ENCODE measurements at regions of chr11 and their contacts with region 1.

Region 1: GRCh38 chr11:1572197-1573076 is at the start of gene DUSP8:
- DNase-seq: peak; percentile 97
- ATAC-seq: peak; percentile 48
- H3K4me3 ChIP-seq: peak within 1 kb of the TSS in 4 of 5 experiments; percentile 40 to 75 (median 64)
- H3K4me3 Mint-ChIP-seq: peak within 1 kb of the TSS; percentile 84
- H3K27ac ChIP-seq: peak within 1 kb of the TSS; percentile 85
- H3K27ac Mint-ChIP-seq: peak within 1 kb of the TSS; percentile 70
- H3K4me1 ChIP-seq: peaks cover 31 to 33% of the 10 kb centered on the region in 2 donors
- H3K4me1 Mint-ChIP-seq: peaks cover 20% of the 10 kb centered on the region
- H3K27me3 ChIP-seq: peaks cover 0 to 32% (median 9%) of the 10 kb centered on the region in 4 experiments
- H3K27me3 Mint-ChIP-seq: peaks cover 10% of the 10 kb centered on the region
- CTCF ChIP-seq: no peak
- total RNA-seq, gene DUSP8: 4.3 and 5.2 TPM in 2 replicates

Region 2: GRCh38 chr11:1262172-1263006 is 310.0 kb before region 1 on chr11:
- CTCF ChIA-PET with region 1: interaction called, 7 read pairs
- POLR2A ChIA-PET with region 1: no interaction called
- intact Hi-C with region 1: loop called (anchors 5 kb)
- DNase-seq: peak; percentile 83
- ATAC-seq: peak; percentile 94
- H3K4me3 ChIP-seq: peak overlapping the region in 4 of 5 experiments; percentile 54 to 67 (median 62)
- H3K4me3 Mint-ChIP-seq: peak overlapping the region; percentile 87
- H3K27ac ChIP-seq: peak overlapping the region; percentile 25 to 79
- H3K27ac Mint-ChIP-seq: peak overlapping the region; percentile 86
- H3K4me1 ChIP-seq: peaks cover 12 to 20% of the 10 kb centered on the region in 2 donors
- H3K4me1 Mint-ChIP-seq: peaks cover 19% of the 10 kb centered on the region
- H3K27me3 ChIP-seq: no peaks in the 10 kb centered on the region
- H3K27me3 Mint-ChIP-seq: no peaks in the 10 kb centered on the region
- CTCF ChIP-seq: no peak

Region 3: DNA sequence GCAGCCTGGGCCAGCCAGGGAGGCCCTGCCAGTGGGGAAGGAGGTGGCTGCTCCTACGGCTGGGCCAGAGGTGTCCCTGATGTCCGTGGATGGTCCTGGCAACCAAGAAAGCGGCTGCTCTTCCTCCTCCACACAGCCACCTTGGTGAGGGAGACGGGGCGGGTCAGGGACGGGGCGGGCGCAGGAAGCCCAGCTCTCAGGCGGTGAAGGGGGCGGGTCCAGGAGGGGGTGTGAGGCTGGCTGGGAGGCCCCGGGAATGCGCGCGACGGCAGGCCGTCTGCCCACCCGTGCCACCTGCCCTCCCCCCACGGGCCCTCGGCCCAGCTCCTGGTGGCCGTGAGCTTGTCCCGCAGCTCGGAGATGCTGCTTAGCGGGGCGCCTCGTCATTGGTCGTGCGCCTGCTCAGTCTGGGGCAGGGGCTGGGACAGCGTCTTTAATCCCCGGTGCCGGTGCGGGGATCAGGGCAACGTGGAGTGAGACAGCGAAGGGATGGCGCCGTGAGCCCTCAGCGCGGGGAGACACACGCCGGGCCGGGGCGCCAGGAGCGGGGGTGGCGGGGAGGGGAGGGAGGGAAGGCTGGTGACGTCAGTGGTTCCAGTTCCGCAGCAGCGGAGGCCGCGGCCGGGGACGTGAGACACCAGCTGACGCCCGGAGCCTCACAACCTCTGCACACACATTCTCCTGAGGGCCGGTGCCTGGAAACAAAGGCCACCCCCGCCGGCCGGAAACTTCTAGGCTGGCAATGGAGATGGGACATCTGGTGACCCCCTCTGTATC is 189.4 kb before region 1 on chr11:
- CTCF ChIA-PET with region 1: interaction called, 3 read pairs
- POLR2A ChIA-PET with region 1: no interaction called
- intact Hi-C with region 1: loop called (anchors 1 kb)
- DNase-seq: peak; percentile 92
- ATAC-seq: peak; percentile 76
- H3K4me3 ChIP-seq: peak overlapping the region in 4 of 5 experiments; percentile 64 to 81 (median 70)
- H3K4me3 Mint-ChIP-seq: peak overlapping the region; percentile 87
- H3K27ac ChIP-seq: peak overlapping the region; percentile 96
- H3K27ac Mint-ChIP-seq: peak overlapping the region; percentile 96
- H3K4me1 ChIP-seq: peaks cover 3 to 30% of the 10 kb centered on the region in 2 donors
- H3K4me1 Mint-ChIP-seq: peaks cover 35% of the 10 kb centered on the region
- H3K27me3 ChIP-seq: peaks cover 0 to 2% (median 0%) of the 10 kb centered on the region in 4 experiments
- H3K27me3 Mint-ChIP-seq: no peaks in the 10 kb centered on the region
- CTCF ChIP-seq: no peak

Region 4: DNA sequence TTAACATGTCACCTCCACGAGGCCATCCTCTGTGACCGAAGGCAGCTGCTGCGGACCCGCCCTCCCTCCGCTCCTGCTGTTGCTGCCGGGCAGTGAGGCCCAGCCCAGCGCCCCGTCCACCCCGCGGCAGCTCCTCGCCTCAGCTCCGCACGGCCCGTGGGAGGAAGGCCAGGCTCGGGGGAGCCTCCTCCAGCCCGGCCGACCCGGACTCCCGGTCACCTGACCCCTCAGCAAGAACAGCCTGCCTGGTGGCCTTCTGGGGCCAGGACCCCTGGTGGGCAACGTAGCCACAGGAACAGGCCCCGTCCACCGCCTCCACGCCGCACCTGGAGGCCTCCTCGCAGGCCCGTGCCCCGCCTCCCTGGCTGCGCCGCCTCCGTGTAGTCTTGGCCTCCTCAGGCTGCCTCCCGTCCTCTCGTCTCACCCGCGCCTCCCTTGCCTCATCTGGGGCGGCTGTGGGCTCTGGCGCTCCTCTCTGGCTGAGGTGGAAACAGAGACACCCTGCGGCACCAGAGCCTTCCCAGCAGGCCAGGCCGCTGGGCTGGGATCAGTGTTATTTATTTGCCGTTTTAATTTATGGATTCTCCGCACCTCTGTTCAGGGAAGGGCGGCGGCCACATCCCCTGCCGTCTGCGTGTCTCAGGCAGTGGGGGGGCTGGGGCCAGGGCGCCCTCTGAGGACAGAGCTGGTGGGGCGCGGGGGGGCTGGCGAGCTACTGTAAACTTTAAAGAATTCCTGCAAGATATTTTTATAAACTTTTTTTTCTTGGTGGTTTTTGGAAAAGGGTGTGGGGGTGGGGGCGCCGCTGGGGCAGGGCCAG is 111.2 kb before region 1 on chr11:
- CTCF ChIA-PET with region 1: no interaction called
- POLR2A ChIA-PET with region 1: no interaction called
- intact Hi-C with region 1: no loop called
- DNase-seq: no peak
- ATAC-seq: no peak
- H3K4me3 ChIP-seq: no peak overlapping the region
- H3K4me3 Mint-ChIP-seq: no peak overlapping the region
- H3K27ac ChIP-seq: no peak overlapping the region
- H3K27ac Mint-ChIP-seq: no peak overlapping the region
- H3K4me1 ChIP-seq: no peaks in the 10 kb centered on the region
- H3K4me1 Mint-ChIP-seq: no peaks in the 10 kb centered on the region
- H3K27me3 ChIP-seq: no peaks in the 10 kb centered on the region
- H3K27me3 Mint-ChIP-seq: no peaks in the 10 kb centered on the region
- CTCF ChIP-seq: no peak

Region 5: GRCh38 chr11:1515082-1516060 is 57.1 kb before region 1 on chr11:
- CTCF ChIA-PET with region 1: interaction called, 14 read pairs
- POLR2A ChIA-PET with region 1: interaction called, 3 read pairs
- intact Hi-C with region 1: no loop called
- DNase-seq: peak; percentile 75
- ATAC-seq: peak; percentile 84
- H3K4me3 ChIP-seq: no peak overlapping the region
- H3K4me3 Mint-ChIP-seq: peak overlapping the region; percentile 23
- H3K27ac ChIP-seq: no peak overlapping the region
- H3K27ac Mint-ChIP-seq: no peak overlapping the region
- H3K4me1 ChIP-seq: peaks cover 9 to 17% of the 10 kb centered on the region in 2 donors
- H3K4me1 Mint-ChIP-seq: peaks cover 53% of the 10 kb centered on the region
- H3K27me3 ChIP-seq: no peaks in the 10 kb centered on the region
- H3K27me3 Mint-ChIP-seq: no peaks in the 10 kb centered on the region
- CTCF ChIP-seq: peak; percentile 86

Region 6: GRCh38 chr11:1538153-1538552 is 34.3 kb before region 1 on chr11:
- CTCF ChIA-PET with region 1: interaction called, 9 read pairs
- POLR2A ChIA-PET with region 1: no interaction called
- intact Hi-C with region 1: loop called (anchors 2 kb)
- DNase-seq: no peak
- ATAC-seq: no peak
- H3K4me3 ChIP-seq: no peak overlapping the region
- H3K4me3 Mint-ChIP-seq: no peak overlapping the region
- H3K27ac ChIP-seq: no peak overlapping the region
- H3K27ac Mint-ChIP-seq: no peak overlapping the region
- H3K4me1 ChIP-seq: no peaks in the 10 kb centered on the region
- H3K4me1 Mint-ChIP-seq: peaks cover 8% of the 10 kb centered on the region
- H3K27me3 ChIP-seq: peaks cover 0 to 18% (median 4%) of the 10 kb centered on the region in 4 experiments
- H3K27me3 Mint-ChIP-seq: peaks cover 17% of the 10 kb centered on the region
- CTCF ChIP-seq: no peak

Region 7: DNA sequence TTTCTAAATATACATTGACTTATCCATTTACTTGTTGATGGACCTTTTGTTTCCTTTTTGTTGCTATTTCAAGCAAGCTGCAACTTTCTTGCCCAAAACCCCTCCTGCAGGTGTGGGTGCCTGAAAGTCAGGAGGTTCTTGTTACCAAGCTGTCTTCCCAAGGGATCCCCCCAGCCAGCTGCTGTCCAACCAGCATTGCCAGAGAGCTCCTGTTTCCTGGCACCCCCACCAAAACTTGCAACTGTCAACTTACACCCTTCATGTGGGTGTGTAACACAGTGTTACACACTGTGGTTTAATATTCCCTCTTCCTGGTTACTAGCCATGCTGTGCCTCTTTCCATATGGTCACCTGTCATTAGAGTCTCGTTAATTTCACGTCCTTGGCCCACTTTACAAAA is 14.3 kb after region 1 on chr11:
- CTCF ChIA-PET with region 1: interaction called, 18 read pairs
- POLR2A ChIA-PET with region 1: interaction called, 7 read pairs
- intact Hi-C with region 1: no loop called
- DNase-seq: no peak
- ATAC-seq: no peak
- H3K4me3 ChIP-seq: no peak overlapping the region
- H3K4me3 Mint-ChIP-seq: no peak overlapping the region
- H3K27ac ChIP-seq: no peak overlapping the region
- H3K27ac Mint-ChIP-seq: peak overlapping the region; percentile 59
- H3K4me1 ChIP-seq: peaks cover 8 to 34% of the 10 kb centered on the region in 2 donors
- H3K4me1 Mint-ChIP-seq: peaks cover 25% of the 10 kb centered on the region
- H3K27me3 ChIP-seq: peaks cover 0 to 28% (median 1%) of the 10 kb centered on the region in 4 experiments
- H3K27me3 Mint-ChIP-seq: peaks cover 17% of the 10 kb centered on the region
- CTCF ChIP-seq: no peak

Region 8: DNA sequence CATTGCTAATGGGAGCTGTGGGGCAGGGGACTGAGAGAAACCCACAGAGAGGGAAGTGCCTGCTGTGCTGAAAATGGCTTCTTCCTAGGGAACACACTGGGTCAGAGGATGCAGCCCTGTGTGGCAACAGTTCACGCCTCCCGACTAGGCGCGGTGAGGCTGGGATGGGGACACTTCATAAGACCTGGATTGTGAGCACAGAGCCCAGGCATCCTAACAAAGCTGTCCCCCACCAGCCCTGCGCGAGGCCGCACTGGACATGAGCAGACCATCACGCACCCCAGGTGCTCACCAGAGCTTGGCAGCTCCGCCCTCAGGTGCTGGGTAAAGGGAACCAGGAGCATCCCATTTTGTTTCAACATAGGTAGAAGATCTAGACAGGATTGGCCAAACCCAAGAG is 51.3 kb after region 1 on chr11:
- CTCF ChIA-PET with region 1: no interaction called
- POLR2A ChIA-PET with region 1: no interaction called
- intact Hi-C with region 1: no loop called
- DNase-seq: no peak
- ATAC-seq: no peak
- H3K4me3 ChIP-seq: no peak overlapping the region
- H3K4me3 Mint-ChIP-seq: no peak overlapping the region
- H3K27ac ChIP-seq: no peak overlapping the region
- H3K27ac Mint-ChIP-seq: no peak overlapping the region
- H3K4me1 ChIP-seq: peaks cover 2% of the 10 kb centered on the region in 2 donors
- H3K4me1 Mint-ChIP-seq: peaks cover 5% of the 10 kb centered on the region
- H3K27me3 ChIP-seq: peaks cover 0 to 9% (median 0%) of the 10 kb centered on the region in 4 experiments
- H3K27me3 Mint-ChIP-seq: peaks cover 22% of the 10 kb centered on the region
- CTCF ChIP-seq: no peak

Measured in B cell (primary cell).